Caco-2 (cell line): ENCODE measurements at regions of chr9 and their contacts with region 1.

Region 1: GRCh38 chr9:110152704-110153374 is 55.1 kb downstream of the C9orf152 start:
- DNase-seq: peak in 1 of 2 experiments; percentile 68
- H3K4me3 ChIP-seq: no peak overlapping the region
- H3K4me3 Mint-ChIP-seq: no peak overlapping the region
- H3K27ac Mint-ChIP-seq: peak overlapping the region; percentile 34
- H3K4me1 ChIP-seq: 0 out of 2 replicates have a peak, but pooled peaks cover 1% of the 10 kb centered on the region
- H3K4me1 Mint-ChIP-seq: peaks cover 56% of the 10 kb centered on the region
- H3K27me3 ChIP-seq: no peaks in the 10 kb centered on the region
- H3K27me3 Mint-ChIP-seq: no peaks in the 10 kb centered on the region
- CTCF ChIP-seq: peak; percentile 75 to 84

Region 2: DNA sequence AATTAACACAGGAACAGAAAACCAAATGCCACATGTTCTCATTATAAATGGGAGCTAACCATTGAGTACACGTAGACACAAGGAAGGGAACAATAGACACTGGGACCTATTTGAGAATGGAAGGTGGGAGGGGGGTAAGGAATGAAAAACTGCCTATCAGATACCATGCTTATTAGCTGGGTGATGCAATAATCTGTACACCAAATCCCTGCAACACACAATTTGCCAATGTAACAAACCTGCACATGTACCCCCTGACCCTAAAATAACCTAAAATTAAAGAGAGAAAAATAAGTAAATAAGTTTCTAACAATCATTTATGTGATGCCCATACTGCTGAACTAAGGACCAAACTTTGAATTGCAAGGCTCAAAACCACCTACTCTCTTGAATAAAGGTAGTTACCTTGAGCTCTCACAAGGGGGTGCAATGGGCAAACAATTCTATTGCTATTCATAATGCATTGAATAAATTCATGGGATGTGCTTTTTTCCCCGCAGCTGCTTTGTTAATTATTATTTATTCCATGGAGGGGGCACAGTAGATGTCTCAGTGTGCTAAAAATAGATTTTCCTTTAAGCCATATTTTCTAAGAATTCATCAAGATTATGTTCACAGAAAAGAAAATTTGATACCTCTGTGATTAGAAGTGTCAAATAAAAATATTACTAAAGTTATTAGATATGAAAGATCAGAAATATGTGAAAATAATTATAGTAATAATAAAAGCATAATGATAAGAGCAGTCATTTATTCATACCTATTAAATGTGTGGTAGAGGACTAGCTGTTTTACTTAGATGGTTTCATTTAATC is 578.6 kb before region 1 on chr9:
- CTCF ChIA-PET with region 1: no interaction called
- POLR2A ChIA-PET with region 1: no interaction called
- intact Hi-C with region 1: loop called (anchors 10 kb)
- DNase-seq: peak in 1 of 2 experiments; percentile 63
- H3K4me3 ChIP-seq: no peak overlapping the region
- H3K4me3 Mint-ChIP-seq: no peak overlapping the region
- H3K27ac Mint-ChIP-seq: no peak overlapping the region
- H3K4me1 ChIP-seq: no peaks in the 10 kb centered on the region
- H3K4me1 Mint-ChIP-seq: no peaks in the 10 kb centered on the region
- H3K27me3 ChIP-seq: 0 out of 2 replicates have a peak, but pooled peaks cover 2% of the 10 kb centered on the region
- H3K27me3 Mint-ChIP-seq: peaks cover 21% of the 10 kb centered on the region
- CTCF ChIP-seq: peak; percentile 64 to 72

Region 3: GRCh38 chr9:109969011-109969410 is 183.8 kb before region 1 on chr9:
- CTCF ChIA-PET with region 1: no interaction called
- POLR2A ChIA-PET with region 1: no interaction called
- intact Hi-C with region 1: loop called (anchors 1 kb)
- DNase-seq: peak; percentile 54 to 58
- H3K4me3 ChIP-seq: no peak overlapping the region
- H3K4me3 Mint-ChIP-seq: no peak overlapping the region
- H3K27ac Mint-ChIP-seq: no peak overlapping the region
- H3K4me1 ChIP-seq: no peaks in the 10 kb centered on the region
- H3K4me1 Mint-ChIP-seq: no peaks in the 10 kb centered on the region
- H3K27me3 ChIP-seq: no peaks in the 10 kb centered on the region
- H3K27me3 Mint-ChIP-seq: no peaks in the 10 kb centered on the region
- CTCF ChIP-seq: peak in 1 of 2 experiments; percentile 37

Region 4: GRCh38 chr9:110058304-110058953 is 94.4 kb before region 1 on chr9:
- CTCF ChIA-PET with region 1: interaction called, 3 read pairs
- POLR2A ChIA-PET with region 1: no interaction called
- intact Hi-C with region 1: loop called (anchors 1 kb)
- DNase-seq: peak; percentile 78 to 79
- H3K4me3 ChIP-seq: no peak overlapping the region
- H3K4me3 Mint-ChIP-seq: no peak overlapping the region
- H3K27ac Mint-ChIP-seq: no peak overlapping the region
- H3K4me1 ChIP-seq: peaks cover 12% of the 10 kb centered on the region; the same call in 1 of the 2 replicates
- H3K4me1 Mint-ChIP-seq: peaks cover 18% of the 10 kb centered on the region
- H3K27me3 ChIP-seq: no peaks in the 10 kb centered on the region
- H3K27me3 Mint-ChIP-seq: no peaks in the 10 kb centered on the region
- CTCF ChIP-seq: peak; percentile 68 to 69

Region 5: GRCh38 chr9:110125207-110125751 is 27.6 kb before region 1 on chr9:
- CTCF ChIA-PET with region 1: interaction called, 3 read pairs
- POLR2A ChIA-PET with region 1: no interaction called
- intact Hi-C with region 1: loop called (anchors 1 kb)
- DNase-seq: peak; percentile 96 to 97
- H3K4me3 ChIP-seq: peak overlapping the region; percentile 49
- H3K4me3 Mint-ChIP-seq: peak overlapping the region; percentile 90
- H3K27ac Mint-ChIP-seq: peak overlapping the region; percentile 97
- H3K4me1 ChIP-seq: peaks cover 51% of the 10 kb centered on the region
- H3K4me1 Mint-ChIP-seq: peaks cover 33% of the 10 kb centered on the region
- H3K27me3 ChIP-seq: no peaks in the 10 kb centered on the region
- H3K27me3 Mint-ChIP-seq: no peaks in the 10 kb centered on the region
- CTCF ChIP-seq: no peak

Region 6: DNA sequence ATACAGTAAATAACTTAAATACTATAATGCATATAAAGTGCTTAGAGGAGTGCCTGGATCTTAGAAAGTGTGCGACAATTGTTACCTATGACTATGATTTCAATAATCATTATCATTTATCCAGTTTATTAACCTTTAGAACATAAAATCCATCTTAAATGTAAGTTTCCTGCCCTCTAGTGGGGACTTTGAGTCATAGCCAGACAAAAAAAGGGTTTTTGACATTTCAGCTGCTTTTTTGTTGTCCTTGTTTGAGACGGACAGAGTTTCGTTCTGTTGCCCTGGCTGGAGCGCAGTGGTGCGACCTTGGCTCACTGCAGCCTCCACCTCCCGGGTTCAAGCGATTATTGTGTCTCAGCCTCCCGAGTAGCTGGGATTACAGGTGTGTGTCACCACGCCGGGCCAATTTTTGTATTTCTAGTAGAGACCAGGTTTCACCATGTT is 64.8 kb after region 1 on chr9:
- CTCF ChIA-PET with region 1: no interaction called
- POLR2A ChIA-PET with region 1: no interaction called
- intact Hi-C with region 1: no loop called
- DNase-seq: no peak
- H3K4me3 ChIP-seq: no peak overlapping the region
- H3K4me3 Mint-ChIP-seq: no peak overlapping the region
- H3K27ac Mint-ChIP-seq: no peak overlapping the region
- H3K4me1 ChIP-seq: peaks cover 80% of the 10 kb centered on the region
- H3K4me1 Mint-ChIP-seq: peaks cover 47% of the 10 kb centered on the region
- H3K27me3 ChIP-seq: no peaks in the 10 kb centered on the region
- H3K27me3 Mint-ChIP-seq: no peaks in the 10 kb centered on the region
- CTCF ChIP-seq: peak; percentile 61 to 63